ENCODE measurements at regions of chr1 and their contacts with region 1.

Region 1: GRCh38 chr1:3624200-3625136 is at the start of gene TPRG1L:
- DNase-seq: peak; percentile 99
- ATAC-seq: peak; percentile 98
- H3K4me3 Mint-ChIP-seq: peak within 1 kb of the TSS; percentile 89
- H3K27ac Mint-ChIP-seq: peak within 1 kb of the TSS; percentile 69
- H3K4me1 Mint-ChIP-seq: peaks cover 31% of the 10 kb centered on the region
- H3K27me3 Mint-ChIP-seq: no peaks in the 10 kb centered on the region
- total RNA-seq, gene TPRG1L: 6.7 to 7.2 TPM

Region 2: DNA sequence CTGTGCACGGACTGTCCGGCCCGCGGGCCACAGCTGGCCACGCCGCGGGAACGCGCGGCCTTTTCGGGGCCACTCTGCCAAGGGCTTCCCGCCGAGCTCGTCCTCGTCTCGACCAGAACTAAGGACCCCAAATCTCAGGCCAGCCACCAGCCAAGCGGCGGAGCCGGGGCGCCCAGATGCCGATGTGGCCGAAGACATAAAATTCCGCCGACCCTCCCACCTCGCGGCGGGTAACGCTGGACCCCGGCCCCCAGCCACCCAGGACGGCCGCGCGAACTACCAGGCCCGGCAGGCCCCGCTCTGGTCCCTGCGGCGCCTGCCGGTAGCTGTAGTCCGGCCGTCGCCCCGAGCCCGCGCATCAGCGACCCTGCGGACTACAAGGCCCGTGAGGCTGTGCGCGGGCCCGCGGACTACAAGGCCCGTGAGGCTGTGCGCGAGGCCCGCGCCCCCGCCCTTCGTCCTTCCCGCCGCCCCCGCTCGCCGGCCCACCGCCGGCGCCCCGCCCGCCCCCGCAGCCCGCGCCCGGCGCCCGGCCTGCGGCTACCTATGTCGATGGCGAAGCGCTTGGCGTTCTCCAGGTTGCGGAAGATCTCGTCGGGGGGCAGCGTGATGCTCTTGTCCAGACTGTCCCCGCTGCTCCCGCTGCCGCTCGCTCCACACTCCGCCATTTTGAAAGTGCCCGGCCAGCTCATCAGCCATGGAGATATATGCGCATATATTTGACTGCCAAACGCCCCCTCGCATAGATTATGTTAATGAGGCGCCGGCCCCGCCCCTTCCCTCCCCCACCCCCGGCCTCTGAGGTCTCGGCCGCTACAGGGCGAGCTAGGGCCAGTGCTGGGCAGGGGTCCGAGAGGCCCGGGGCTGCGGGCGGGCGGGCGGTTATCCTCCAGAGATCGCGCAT is 1098.3 kb before region 1 on chr1 and contains the start of gene PANK4:
- CTCF ChIA-PET with region 1: no interaction called
- POLR2A ChIA-PET with region 1: no interaction called
- intact Hi-C with region 1: loop called in 1 of 2 experiments (anchors 10 kb)
- DNase-seq: peak; percentile 96
- ATAC-seq: peak; percentile 87
- H3K4me3 Mint-ChIP-seq: peak within 1 kb of the TSS; percentile 77
- H3K27ac Mint-ChIP-seq: peak within 1 kb of the TSS; percentile 91
- H3K4me1 Mint-ChIP-seq: peaks cover 43% of the 10 kb centered on the region
- H3K27me3 Mint-ChIP-seq: peaks cover 3% of the 10 kb centered on the region
- total RNA-seq, gene PANK4: 32.4 to 39.2 TPM

Region 3: DNA sequence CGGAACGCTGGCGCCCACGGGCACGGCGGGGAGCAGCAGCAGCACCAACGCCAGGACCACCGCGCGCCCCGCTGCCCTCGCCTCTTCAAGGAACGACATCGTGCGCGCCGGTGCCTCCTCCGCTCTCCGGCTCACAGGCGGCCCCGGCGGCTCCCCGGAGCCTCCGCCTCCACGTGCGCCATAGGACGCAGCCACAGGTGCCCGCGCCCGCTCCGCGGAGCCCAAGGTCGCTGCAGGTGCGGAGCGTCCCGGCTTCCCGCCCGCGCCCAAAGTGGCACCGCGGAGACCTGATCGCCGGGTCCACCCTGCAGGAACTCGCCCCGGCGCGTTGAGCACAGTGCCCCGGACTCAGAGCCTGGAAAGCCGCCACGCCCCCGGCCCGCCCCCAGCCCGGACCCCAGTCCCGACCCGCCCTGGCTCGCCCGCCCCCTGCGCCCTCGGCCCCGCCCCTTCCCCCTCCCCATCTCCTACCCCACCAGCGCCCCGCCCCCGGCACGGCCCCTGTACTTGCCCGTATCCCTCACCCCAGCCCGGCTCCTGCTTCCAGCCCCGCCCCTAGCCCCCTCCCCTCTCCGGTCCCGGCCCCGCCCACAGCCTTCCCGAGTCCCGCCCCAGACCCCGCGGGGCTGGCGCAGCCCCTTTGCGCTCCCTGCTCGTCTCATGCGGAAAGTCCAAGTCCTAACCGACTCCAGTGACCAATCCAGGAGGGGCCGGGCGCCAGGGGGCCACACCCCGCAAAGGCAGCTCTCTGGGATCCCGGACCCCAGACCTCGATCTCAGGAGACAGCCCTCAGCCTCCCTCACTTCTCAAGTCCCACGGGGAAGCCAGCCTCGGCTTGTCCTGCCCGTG is 13.1 kb before region 1 on chr1 and contains the start of gene MEGF6:
- CTCF ChIA-PET with region 1: interaction called, 3 read pairs
- POLR2A ChIA-PET with region 1: no interaction called
- intact Hi-C with region 1: loop called in 1 of 2 experiments (anchors 1 kb)
- DNase-seq: peak; percentile 72
- ATAC-seq: peak; percentile 67
- H3K4me3 Mint-ChIP-seq: peak within 1 kb of the TSS; percentile 63
- H3K27ac Mint-ChIP-seq: no peak within 1 kb of the TSS
- H3K4me1 Mint-ChIP-seq: peaks cover 5% of the 10 kb centered on the region
- H3K27me3 Mint-ChIP-seq: peaks cover 16% of the 10 kb centered on the region
- total RNA-seq, gene MEGF6: 2.6 to 4.5 TPM

Region 4: DNA sequence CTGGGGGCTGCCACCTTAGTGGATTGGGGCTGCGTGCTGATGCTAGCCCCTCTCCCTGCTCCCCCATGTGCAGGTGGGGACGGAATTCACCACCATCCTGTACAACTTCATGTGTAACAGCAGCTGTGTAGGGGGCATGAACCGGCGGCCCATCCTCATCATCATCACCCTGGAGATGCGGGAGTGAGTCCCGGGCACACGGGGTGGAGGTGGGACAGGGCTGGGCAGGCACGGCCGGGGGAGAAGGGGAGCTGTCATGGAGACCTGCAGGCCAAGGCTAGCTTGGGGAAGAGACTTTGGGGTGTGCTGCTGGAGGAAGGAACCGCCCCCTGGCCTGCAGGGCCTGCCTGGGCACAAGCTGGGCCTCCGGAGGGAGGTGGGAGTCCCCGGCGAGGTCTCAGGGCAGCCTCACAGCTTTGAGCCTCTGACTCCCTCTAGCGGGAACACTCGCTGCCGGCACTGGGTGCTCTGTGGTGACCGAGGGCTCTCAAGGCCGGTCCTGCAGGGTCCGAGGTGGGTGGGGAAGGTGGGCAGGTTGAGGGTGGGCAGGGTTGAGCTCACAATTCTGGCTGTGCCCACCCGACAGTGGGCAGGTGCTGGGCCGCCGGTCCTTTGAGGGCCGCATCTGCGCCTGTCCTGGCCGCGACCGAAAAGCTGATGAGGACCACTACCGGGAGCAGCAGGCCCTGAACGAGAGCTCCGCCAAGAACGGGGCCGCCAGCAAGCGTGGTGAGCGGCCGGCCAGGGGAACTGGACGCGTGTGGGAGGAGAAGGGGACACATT is 102.8 kb after region 1 on chr1:
- CTCF ChIA-PET with region 1: interaction called, 3 read pairs
- POLR2A ChIA-PET with region 1: no interaction called
- intact Hi-C with region 1: loop called in 1 of 2 experiments (anchors 1 kb)
- DNase-seq: peak; percentile 61
- ATAC-seq: peak; percentile 49
- H3K4me3 Mint-ChIP-seq: no peak overlapping the region
- H3K27ac Mint-ChIP-seq: no peak overlapping the region
- H3K4me1 Mint-ChIP-seq: no peaks in the 10 kb centered on the region
- H3K27me3 Mint-ChIP-seq: peaks cover 2% of the 10 kb centered on the region

Region 5: GRCh38 chr1:3772027-3772714 is 147.7 kb after region 1 on chr1:
- CTCF ChIA-PET with region 1: no interaction called
- POLR2A ChIA-PET with region 1: no interaction called
- intact Hi-C with region 1: loop called in 1 of 2 experiments (anchors 1 kb)
- DNase-seq: peak; percentile 94
- ATAC-seq: peak; percentile 81
- H3K4me3 Mint-ChIP-seq: peak overlapping the region; percentile 70
- H3K27ac Mint-ChIP-seq: peak overlapping the region; percentile 78
- H3K4me1 Mint-ChIP-seq: peaks cover 10% of the 10 kb centered on the region
- H3K27me3 Mint-ChIP-seq: no peaks in the 10 kb centered on the region

Region 6: GRCh38 chr1:3856908-3857790 is 232.7 kb after region 1 on chr1 and contains the starts of genes CEP104 and DFFB:
- CTCF ChIA-PET with region 1: no interaction called
- POLR2A ChIA-PET with region 1: no interaction called
- intact Hi-C with region 1: loop called in 1 of 2 experiments (anchors 1 kb)
- DNase-seq: peak; percentile 97
- ATAC-seq: peak; percentile 99
- H3K4me3 Mint-ChIP-seq: peak within 1 kb of the TSS; percentile 95
- H3K27ac Mint-ChIP-seq: peak within 1 kb of the TSS; percentile 90
- H3K4me1 Mint-ChIP-seq: peaks cover 31% of the 10 kb centered on the region
- H3K27me3 Mint-ChIP-seq: no peaks in the 10 kb centered on the region
- total RNA-seq, gene CEP104: 33.6 to 35.5 TPM
- total RNA-seq, gene DFFB: 7.2 to 8.4 TPM

Measured in activated CD4-positive, alpha-beta T cell treated with anti-CD3 and anti-CD28 coated beads for 36 hours (primary cell).